Posterior vena cava (tissue), 2 donors: ENCODE measurements at regions of chr14 and their contacts with region 1.

Region 1: GRCh38 chr14:99982537-99983250 is 82.5 kb upstream of the EVL start:
- DNase-seq: no peak

Region 2: GRCh38 chr14:100108042-100108825 is 125.5 kb after region 1 on chr14:
- intact Hi-C with region 1: loop called (anchors 5 kb)
- DNase-seq: peak; percentile 94

Region 3: DNA sequence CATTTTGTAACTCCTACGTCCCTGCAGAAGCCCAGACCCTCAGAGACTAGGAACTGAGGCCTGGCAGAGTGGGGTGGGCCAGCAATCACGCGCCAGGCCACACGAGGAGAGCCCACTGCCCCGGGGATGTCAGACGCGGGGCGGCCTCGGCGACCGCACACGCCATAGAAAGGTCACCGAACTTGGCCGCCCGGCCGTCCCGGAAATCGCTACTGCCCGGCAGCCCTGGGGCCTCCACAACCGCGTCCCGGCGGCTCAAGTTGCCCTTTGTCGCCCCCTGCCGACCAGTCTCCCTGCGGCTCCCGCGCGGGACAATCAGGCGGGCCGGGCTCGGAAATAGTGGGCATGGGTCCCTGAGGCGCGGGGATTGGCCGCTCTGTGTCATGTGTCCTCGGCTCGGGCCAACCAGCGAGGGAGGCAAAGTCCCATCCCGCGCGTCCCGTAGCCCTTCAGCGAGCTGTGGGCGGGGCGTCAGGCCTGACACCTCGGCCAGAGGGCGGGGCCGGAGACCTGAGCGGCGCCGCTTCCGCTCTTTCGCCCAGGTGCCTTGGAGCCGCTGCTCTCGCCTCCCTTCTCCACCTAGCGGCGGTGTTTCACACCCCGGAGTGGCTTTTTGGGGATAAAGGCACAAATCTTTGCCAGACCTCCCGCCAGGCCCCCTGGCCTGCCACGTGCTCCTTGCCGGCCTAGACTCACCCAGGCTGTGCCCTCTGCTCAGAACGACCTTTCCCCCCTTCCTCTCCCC is 210.2 kb after region 1 on chr14:
- intact Hi-C with region 1: loop called (anchors 10 kb)
- DNase-seq: peak; percentile 100